Tibial artery (tissue), 4 donors: ENCODE measurements at regions of chr14 and their contacts with region 1.

Region 1: DNA sequence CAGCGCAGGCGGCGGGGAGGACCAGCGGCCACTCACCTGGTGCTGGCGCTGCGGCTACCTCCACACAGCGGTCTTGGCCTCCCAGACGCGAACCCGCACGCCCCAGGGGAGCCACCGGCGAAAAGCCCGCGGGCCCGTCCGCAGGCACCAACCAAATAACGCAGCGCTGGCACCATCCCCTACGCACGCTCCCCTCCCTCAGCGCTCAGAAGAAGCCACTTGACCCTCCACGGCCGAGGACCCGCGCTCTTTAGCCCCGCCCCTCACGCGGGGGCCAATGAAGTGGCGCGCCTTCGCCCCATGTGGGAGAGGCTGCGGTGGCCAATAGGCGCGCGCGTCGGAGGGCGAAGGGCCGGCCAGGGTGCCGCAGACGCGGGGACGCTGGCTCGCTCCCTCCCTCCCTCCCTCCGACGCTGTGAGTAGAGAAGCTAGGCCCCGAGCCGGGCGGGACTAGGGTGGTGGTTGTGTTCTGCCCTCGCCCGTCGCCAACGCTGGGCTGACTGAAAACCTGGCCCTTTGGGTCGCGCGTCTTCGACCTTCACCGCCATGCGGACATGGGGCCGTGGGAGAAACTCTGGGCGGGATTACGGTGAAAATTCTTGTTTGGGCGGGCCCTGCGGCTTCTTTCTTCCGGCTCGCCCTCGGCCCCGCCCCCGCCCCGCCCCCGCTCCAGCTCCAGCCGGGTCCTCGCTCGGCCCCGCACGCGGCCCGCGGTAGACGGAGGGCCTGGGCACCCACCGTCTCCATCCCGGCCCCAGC is at the starts of genes DMAC2L and L2HGDH:
- DNase-seq: peak; percentile 91 to 96
- H3K4me3 ChIP-seq: peak within 1 kb of the TSS; percentile 73 to 84
- H3K27ac ChIP-seq: peak within 1 kb of the TSS; percentile 86 to 87
- H3K4me1 ChIP-seq: peaks cover 0 to 20% (median 12%) of the 10 kb centered on the region in 4 donors
- H3K27me3 ChIP-seq: no peaks in the 10 kb centered on the region
- CTCF ChIP-seq: peak in 1 of 2 experiments; percentile 18

Region 2: DNA sequence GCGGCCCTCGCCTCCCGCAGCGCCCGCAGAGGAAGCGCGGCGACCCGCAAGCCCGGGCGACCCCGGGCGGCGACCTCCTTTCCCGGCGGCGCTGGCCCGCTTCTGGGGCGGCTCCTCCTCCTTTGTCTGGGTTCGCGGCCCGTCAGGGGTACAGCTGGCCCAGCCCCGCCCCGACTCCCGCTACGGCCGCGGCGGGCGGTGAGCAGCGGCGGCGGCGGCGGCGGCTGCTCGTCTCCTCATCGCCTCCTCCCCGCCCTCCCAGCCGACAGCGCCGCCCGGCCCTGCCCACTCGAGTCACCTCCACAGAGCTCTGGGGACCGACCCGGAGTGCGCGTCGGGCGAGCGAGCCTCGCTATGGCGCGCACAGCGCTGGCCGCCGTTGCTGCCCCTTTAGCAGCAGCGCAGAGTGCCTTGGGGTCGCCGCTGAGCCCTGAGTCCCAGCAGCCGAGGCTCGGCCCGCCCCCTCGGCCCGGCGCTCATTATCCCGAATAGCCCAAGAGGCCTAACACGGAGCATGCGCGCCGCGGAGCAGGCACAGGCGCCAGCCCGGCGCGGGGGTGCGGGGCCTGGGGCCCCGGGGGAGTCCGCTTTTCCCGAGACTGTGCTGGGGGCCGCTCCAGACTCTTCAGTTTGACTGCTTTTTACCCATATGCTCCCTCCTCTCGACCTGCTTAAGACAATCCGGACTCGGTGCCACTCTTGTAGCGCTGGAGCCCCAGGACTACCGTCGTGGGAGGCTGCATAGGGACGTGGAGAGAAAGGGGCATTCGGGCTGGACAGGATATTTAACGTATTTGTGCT is 80.5 kb before region 1 on chr14 and contains the start of gene SOS2:
- intact Hi-C with region 1: loop called (anchors 5 kb)
- DNase-seq: peak; percentile 85 to 92
- H3K4me3 ChIP-seq: peak within 1 kb of the TSS; percentile 81 to 94
- H3K27ac ChIP-seq: peak within 1 kb of the TSS; percentile 94 to 96
- H3K4me1 ChIP-seq: peaks cover 0 to 52% (median 23%) of the 10 kb centered on the region in 4 donors
- H3K27me3 ChIP-seq: no peaks in the 10 kb centered on the region
- CTCF ChIP-seq: no peak

Region 3: DNA sequence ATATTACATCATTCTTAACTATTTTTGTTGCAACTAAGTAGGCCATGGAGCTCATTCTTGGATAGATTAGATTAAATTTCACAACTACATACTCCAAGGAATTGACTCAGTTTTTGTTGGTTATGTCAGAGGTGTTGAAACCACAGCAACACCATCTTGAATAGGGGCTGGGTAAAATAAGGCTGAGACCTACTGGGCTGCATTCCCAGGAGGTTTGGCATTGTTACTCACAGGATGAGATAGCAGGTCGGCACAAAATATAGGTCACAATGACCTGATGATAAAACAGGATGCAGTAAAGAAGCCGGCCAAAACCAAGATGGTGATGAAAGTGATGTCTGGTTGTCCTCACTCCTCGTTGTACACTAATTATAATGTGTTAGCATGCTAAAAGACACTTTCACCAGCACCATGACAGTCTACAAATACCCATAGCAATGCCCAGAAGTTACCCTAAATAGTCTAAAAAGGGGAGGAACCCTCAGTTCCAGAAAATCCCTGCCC is 20.9 kb after region 1 on chr14:
- intact Hi-C with region 1: no loop called
- DNase-seq: peak in 1 of 2 donors; percentile 62
- H3K4me3 ChIP-seq: no peak overlapping the region
- H3K27ac ChIP-seq: no peak overlapping the region
- H3K4me1 ChIP-seq: peaks cover 0 to 17% (median 8%) of the 10 kb centered on the region in 4 donors
- H3K27me3 ChIP-seq: no peaks in the 10 kb centered on the region
- CTCF ChIP-seq: no peak

Region 4: DNA sequence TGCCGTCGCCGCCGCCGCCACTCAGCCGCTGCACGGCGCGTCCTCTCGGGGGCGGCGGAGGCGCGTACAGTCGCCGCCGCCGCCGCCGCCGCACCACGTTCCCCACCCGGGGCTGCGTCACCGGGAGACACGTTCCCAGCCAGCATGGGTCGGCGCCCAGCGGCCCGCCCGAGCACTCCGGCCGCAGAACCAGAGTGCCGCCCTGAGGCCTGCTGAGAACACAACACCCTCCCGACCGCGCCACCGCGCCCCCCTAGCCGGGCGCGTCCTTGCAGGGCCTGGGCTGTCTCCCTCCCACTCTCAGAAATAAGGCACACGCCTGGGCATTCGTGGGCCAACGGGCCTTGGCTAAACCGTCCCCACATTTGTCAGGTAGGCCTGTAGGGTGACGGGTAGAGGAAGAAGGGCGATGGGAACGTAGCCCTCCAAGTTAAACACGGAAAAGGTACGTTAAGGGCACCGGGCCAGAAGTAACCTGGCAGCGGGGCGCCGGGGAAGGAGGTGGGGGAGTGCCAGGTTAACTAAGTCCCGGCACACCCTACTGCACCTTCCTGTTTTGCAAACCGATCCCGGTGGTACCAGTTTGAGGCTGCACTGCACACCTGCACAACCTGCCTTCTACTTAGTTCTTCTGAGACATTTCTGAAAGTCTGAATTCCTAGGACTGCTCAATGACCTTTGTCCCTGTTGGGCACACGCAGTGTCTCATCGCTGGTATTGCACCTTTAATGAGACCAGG is 220.5 kb after region 1 on chr14 and contains the start of gene MAP4K5:
- intact Hi-C with region 1: loop called (anchors 2 kb)
- DNase-seq: peak; percentile 91 to 94
- H3K4me3 ChIP-seq: peak within 1 kb of the TSS; percentile 85 to 96
- H3K27ac ChIP-seq: peak within 1 kb of the TSS; percentile 91 to 96
- H3K4me1 ChIP-seq: peaks cover 0 to 38% (median 19%) of the 10 kb centered on the region in 4 donors
- H3K27me3 ChIP-seq: no peaks in the 10 kb centered on the region
- CTCF ChIP-seq: peak; percentile 94 to 95